Ascending aorta (tissue), 2 donors: ENCODE measurements at regions of chr11 and their contacts with region 1.

Region 1: GRCh38 chr11:45339729-45340519 is 53.8 kb upstream of the SYT13 start:
- DNase-seq: peak; percentile 80 to 98
- H3K4me3 ChIP-seq: peak overlapping the region; percentile 27 to 39
- H3K27ac ChIP-seq: peak overlapping the region in 1 of 2 donors; percentile 36
- H3K4me1 ChIP-seq: no peaks in the 10 kb centered on the region
- H3K27me3 ChIP-seq: no peaks in the 10 kb centered on the region
- CTCF ChIP-seq: peak; percentile 87 to 92 (median 87)

Region 2: DNA sequence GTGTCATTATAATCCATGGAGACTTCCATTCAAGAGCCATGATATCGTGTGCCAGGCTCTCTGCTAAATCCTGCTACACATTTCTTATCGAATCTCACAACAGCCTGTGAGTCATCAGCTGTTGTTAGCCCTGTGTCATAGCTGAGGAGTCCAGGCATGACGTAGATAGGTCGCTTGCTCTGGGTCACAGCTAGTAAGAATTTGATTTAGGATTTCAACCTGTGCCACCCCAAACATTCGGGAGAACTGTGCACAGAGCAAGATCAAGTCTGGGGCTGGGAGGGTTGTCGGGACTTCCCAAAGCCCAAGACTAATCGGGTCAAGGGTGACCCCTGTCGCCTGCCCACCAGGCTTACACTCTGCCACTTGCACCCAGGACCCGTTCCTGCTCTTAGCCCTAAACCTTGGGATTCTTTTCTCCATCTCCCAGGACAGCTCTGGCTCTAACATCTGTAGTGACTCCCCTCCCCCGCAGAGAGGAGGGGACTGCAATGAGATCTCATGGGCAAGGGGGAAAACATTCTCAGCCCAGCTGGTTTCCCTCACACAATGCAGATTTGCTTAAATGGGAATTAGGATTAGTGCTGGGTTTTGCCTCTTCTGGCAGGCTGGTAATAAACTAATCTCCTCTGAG is 578.9 kb before region 1 on chr11:
- intact Hi-C with region 1: loop called (anchors 10 kb)
- DNase-seq: peak in 1 of 2 donors; percentile 81
- H3K4me3 ChIP-seq: no peak overlapping the region
- H3K27ac ChIP-seq: no peak overlapping the region
- H3K4me1 ChIP-seq: peaks cover 4 to 25% of the 10 kb centered on the region in 2 donors
- H3K27me3 ChIP-seq: no peaks in the 10 kb centered on the region
- CTCF ChIP-seq: no peak

Region 3: GRCh38 chr11:45354976-45355705 is 15.2 kb after region 1 on chr11:
- intact Hi-C with region 1: loop called (anchors 2 kb)
- DNase-seq: peak; percentile 33 to 88
- H3K4me3 ChIP-seq: peak overlapping the region; percentile 85 to 89
- H3K27ac ChIP-seq: peak overlapping the region; percentile 52 to 75
- H3K4me1 ChIP-seq: peaks cover 0 to 13% of the 10 kb centered on the region in 2 donors
- H3K27me3 ChIP-seq: no peaks in the 10 kb centered on the region
- CTCF ChIP-seq: no peak